A673 (cell line): ENCODE measurements at regions of chr7 and their contacts with region 1.

Region 1: DNA sequence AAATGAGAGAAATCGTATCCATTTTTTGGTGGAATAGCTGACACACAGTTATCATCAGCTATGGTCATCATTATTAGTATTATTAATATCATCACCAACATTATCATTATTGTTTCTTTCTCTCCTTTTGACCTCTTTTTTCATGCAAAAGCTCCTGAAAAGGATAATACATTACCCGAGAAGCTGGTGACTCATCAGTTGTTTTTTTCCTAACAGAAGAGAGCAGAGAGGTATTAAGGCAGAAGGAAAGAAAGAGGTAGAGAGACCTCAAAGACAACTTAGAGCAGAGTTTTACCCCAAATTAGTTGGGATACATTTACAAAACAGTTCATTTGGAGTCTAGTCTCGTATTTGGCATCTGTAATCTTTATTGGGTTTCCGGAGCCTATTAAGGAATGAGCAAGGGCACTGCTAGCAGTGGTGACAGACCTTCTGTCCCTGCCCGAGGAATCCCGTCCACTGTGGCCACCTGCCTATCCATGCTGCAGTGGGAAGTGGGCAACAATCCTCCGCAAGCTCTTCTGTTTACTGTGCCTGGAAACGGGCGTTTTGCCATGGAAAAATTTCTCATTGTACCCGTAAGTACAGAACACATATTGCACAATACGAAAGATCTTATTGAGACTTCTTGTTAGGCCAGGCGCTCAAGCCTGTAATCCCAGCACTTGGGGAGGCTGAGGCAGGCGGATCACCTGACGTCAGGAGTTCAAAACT is 170.0 kb upstream of the MKLN1 start:
- DNase-seq: no peak
- H3K4me3 ChIP-seq: no peak overlapping the region
- H3K27ac ChIP-seq: no peak overlapping the region
- H3K4me1 ChIP-seq: peaks cover 23% of the 10 kb centered on the region
- H3K27me3 ChIP-seq: no peaks in the 10 kb centered on the region
- CTCF ChIP-seq: no peak

Region 2: GRCh38 chr7:130486114-130486958 is 671.4 kb before region 1 on chr7:
- CTCF ChIA-PET with region 1: no interaction called
- POLR2A ChIA-PET with region 1: no interaction called
- intact Hi-C with region 1: no loop called
- DNase-seq: no peak
- H3K4me3 ChIP-seq: no peak overlapping the region
- H3K27ac ChIP-seq: no peak overlapping the region
- H3K4me1 ChIP-seq: no peaks in the 10 kb centered on the region
- H3K27me3 ChIP-seq: no peaks in the 10 kb centered on the region
- CTCF ChIP-seq: peak; percentile 51

Region 3: GRCh38 chr7:131040467-131040932 is 117.2 kb before region 1 on chr7:
- CTCF ChIA-PET with region 1: no interaction called
- POLR2A ChIA-PET with region 1: no interaction called
- intact Hi-C with region 1: no loop called
- DNase-seq: peak; percentile 86
- H3K4me3 ChIP-seq: no peak overlapping the region
- H3K27ac ChIP-seq: peak overlapping the region; percentile 89
- H3K4me1 ChIP-seq: peaks cover 56% of the 10 kb centered on the region
- H3K27me3 ChIP-seq: no peaks in the 10 kb centered on the region
- CTCF ChIP-seq: peak; percentile 93

Region 4: DNA sequence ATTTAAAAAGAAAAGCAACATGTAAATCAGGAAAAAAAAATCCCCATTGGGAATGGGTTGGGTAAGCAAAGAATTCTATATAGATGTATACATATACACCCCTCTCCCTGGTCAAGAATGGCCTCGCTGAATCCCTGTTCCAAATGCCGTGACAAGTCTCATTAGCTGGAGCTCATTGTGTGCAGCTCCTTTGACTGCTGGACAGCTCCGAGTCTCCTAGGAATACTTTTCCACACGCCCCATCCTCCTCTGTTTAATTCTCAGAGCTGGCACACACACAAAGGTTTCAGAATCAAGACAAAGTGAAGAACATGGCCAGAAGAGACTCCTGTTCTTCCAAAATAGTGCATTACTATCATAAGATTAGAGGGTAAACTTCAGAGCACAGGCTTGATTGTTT is 39.1 kb after region 1 on chr7:
- CTCF ChIA-PET with region 1: interaction called, 11 read pairs
- POLR2A ChIA-PET with region 1: no interaction called
- intact Hi-C with region 1: no loop called
- DNase-seq: peak; percentile 46
- H3K4me3 ChIP-seq: no peak overlapping the region
- H3K27ac ChIP-seq: no peak overlapping the region
- H3K4me1 ChIP-seq: no peaks in the 10 kb centered on the region
- H3K27me3 ChIP-seq: no peaks in the 10 kb centered on the region
- CTCF ChIP-seq: no peak

Region 5: DNA sequence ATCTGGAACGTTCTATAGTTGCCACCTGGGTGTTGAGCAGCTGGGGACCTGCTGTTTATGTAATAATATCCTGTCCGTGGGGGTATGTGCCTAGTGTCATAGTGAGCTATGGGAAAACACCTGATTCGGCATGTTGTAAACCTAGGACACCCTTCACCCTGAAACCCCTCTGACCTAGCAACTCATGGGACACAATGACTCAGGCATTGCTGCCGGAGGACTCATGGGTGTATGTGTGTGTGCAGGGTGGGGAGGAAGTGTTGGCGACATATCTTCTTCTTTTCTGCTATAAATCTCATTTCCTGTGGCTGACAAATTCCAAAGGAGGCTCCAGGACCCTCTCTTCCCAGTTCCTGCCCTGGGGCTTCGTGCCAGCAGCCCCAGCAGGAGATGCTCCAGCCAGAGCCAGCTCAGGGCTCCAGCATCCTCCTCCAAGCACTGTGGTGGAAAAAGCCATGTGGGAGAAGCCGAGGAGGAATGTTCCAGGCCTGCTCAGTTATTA is 475.7 kb after region 1 on chr7:
- CTCF ChIA-PET with region 1: no interaction called
- POLR2A ChIA-PET with region 1: no interaction called
- intact Hi-C with region 1: no loop called
- DNase-seq: peak; percentile 79
- H3K4me3 ChIP-seq: no peak overlapping the region
- H3K27ac ChIP-seq: peak overlapping the region; percentile 39
- H3K4me1 ChIP-seq: peaks cover 12% of the 10 kb centered on the region
- H3K27me3 ChIP-seq: no peaks in the 10 kb centered on the region
- CTCF ChIP-seq: no peak